WTC11 (cell line): ENCODE measurements at regions of chr16 and their contacts with region 1.

Region 1: GRCh38 chr16:8763083-8763482 is 34.4 kb downstream of the TMEM186 start:
- DNase-seq: no peak
- ATAC-seq: no peak
- H3K4me3 Mint-ChIP-seq: no peak overlapping the region
- H3K27ac Mint-ChIP-seq: no peak overlapping the region
- H3K4me1 Mint-ChIP-seq: peaks cover 18% of the 10 kb centered on the region
- H3K27me3 Mint-ChIP-seq: no peaks in the 10 kb centered on the region
- CTCF ChIP-seq: no peak

Region 2: GRCh38 chr16:8740775-8741355 is 22.2 kb before region 1 on chr16:
- CTCF ChIA-PET with region 1: no interaction called
- POLR2A ChIA-PET with region 1: interaction called, 10 read pairs
- DNase-seq: no peak
- ATAC-seq: no peak
- H3K4me3 Mint-ChIP-seq: no peak overlapping the region
- H3K27ac Mint-ChIP-seq: no peak overlapping the region
- H3K4me1 Mint-ChIP-seq: peaks cover 6% of the 10 kb centered on the region; the same call in 1 of the 2 replicates
- H3K27me3 Mint-ChIP-seq: peaks cover 5% of the 10 kb centered on the region
- CTCF ChIP-seq: no peak

Region 3: GRCh38 chr16:8788578-8789172 is 25.6 kb after region 1 on chr16:
- CTCF ChIA-PET with region 1: no interaction called
- POLR2A ChIA-PET with region 1: no interaction called
- DNase-seq: no peak
- ATAC-seq: no peak
- H3K4me3 Mint-ChIP-seq: no peak overlapping the region
- H3K27ac Mint-ChIP-seq: no peak overlapping the region
- H3K4me1 Mint-ChIP-seq: 0 out of 2 replicates have a peak, but pooled peaks cover 2% of the 10 kb centered on the region
- H3K27me3 Mint-ChIP-seq: no peaks in the 10 kb centered on the region
- CTCF ChIP-seq: no peak